Dendritic cell treated with granulocyte-macrophage colony-stimulating factor and Interleukin-4, amounts not matched to agents 40 ng/mL and 50 ng/mL, for 4 days (primary cell): ENCODE measurements at regions of chr4 and their contacts with region 1.

Region 1: DNA sequence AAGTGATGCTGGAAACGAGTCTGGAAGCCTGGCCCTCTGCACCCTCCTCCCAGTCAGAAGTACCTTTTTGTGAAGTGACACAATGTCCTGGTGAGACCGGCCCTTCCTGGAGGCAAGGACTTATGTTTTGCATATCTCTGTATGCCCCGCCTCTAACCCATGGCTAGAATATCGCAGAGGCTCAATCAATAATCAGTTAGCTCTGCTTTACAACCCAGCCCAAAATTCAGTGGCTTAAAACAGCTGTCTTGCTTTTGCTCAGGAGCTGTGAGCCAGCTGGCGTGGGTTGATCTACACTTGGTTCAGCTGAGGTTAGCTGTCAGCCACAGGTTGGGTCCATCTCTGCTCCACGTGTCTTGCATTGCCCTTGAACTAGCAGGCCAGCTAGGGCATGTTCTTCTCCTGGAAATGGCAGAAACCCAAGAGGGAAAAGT is 98.8 kb upstream of the METTL14 start:
- H3K4me3 Mint-ChIP-seq: no peak overlapping the region
- H3K27ac Mint-ChIP-seq: no peak overlapping the region
- H3K4me1 Mint-ChIP-seq: peaks cover 43% of the 10 kb centered on the region
- H3K27me3 Mint-ChIP-seq: peaks cover 36% of the 10 kb centered on the region

Region 2: GRCh38 chr4:118278473-118279274 is 307.7 kb before region 1 on chr4:
- intact Hi-C with region 1: loop called (anchors 2 kb)
- H3K4me3 Mint-ChIP-seq: peak overlapping the region; percentile 93
- H3K27ac Mint-ChIP-seq: peak overlapping the region; percentile 99
- H3K4me1 Mint-ChIP-seq: peaks cover 47% of the 10 kb centered on the region
- H3K27me3 Mint-ChIP-seq: no peaks in the 10 kb centered on the region

Region 3: DNA sequence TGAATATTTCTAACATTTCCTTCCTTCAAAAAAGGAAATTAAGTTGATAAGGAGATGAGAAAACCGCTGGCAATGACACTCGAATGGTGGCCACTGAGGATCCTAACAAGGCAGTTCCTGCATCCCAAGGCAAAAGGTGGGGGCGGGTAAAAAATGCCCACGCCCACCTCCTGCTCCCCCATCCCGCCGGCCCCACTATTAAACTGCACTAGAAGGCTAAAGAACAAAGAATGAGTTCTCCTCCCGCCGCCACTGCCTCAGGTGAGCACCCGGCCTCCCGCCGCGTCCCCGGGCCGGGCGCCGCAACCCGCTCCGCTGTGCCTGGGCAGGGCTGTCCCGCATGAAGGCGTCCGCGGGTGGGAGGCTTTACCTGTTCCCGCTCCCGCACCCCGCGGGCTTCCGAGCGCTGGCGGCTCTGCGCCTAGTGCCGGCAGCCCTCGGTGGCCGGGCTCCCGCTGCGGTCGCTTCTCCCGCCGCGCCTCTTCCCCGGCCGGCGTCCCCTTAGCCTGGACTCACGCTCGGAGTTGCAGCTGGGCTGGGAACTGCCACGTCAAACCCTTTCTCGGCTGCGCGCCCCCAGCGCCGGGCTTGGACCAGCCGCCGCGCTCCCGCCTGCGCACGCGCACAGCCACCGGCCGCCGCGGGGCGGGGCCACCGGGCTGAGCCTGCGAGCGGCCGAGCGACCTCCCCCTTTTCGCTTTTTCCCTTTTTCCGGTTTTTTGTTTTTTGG is 249.4 kb after region 1 on chr4 and contains the start of gene SEC24D:
- intact Hi-C with region 1: loop called (anchors 1 kb)
- H3K4me3 Mint-ChIP-seq: peak within 1 kb of the TSS; percentile 100
- H3K27ac Mint-ChIP-seq: peak within 1 kb of the TSS; percentile 87
- H3K4me1 Mint-ChIP-seq: peaks cover 28% of the 10 kb centered on the region
- H3K27me3 Mint-ChIP-seq: peaks cover 3% of the 10 kb centered on the region

Region 4: DNA sequence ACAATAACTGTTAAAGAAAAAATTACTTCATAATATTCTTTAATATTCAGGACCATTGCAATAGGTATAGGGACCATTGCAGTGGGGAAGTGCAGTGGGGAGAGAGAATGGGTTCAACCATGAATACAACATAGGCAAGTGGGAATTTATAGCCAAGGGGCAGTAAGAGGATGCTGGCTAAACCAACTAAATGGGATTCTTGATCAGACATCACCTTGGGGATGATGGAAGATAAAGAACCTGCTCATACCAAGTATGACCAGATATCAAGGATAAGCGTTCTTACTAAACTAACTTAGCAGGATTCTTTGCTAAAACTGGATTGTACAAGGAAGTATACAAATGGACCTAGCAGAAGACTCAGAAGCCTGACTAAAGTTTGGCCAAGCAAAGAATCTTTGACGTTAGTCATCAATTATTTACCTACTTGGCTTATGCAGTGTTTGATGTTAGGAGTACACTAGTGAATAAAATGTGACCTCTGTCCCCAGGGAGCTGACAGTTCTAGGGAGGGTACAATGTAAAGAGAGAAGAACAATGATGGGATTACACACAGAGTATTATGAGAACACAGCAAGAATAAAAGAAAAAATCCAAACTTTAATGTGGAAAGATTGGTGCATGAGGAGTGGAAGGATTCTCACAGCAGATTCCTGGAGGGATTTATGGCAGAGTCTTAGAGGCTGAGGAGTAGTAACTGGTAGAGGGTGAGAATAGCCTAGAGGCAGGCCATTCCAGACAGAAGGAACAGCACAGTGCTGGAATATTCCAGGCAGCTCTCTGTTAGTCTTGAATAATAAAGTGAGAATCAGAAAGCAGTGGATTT is 494.6 kb after region 1 on chr4:
- intact Hi-C with region 1: no loop called
- H3K4me3 Mint-ChIP-seq: no peak overlapping the region
- H3K27ac Mint-ChIP-seq: no peak overlapping the region
- H3K4me1 Mint-ChIP-seq: no peaks in the 10 kb centered on the region
- H3K27me3 Mint-ChIP-seq: peaks cover 3% of the 10 kb centered on the region